Psoas muscle (tissue), 8 donors: ENCODE measurements at regions of chr15 and their contacts with region 1.

Region 1: DNA sequence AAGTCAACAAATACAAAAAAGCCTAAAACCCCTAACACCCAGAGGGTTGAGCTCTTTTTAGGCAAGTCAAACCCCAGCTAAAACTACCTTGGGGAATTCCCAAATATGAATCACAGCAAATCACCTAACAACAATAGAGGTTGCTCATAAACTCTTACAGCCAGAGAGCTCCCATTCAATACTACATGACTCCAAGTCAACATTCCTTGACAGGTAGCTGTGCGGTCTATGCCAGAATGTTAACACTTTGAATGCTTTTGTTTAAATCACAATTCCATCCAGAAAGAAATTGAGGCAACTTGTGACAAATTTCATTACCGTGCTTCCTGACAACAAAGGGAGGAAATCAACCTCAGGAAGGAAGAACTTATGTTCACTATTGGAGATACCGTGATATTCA is 7.5 kb upstream of the UACA start:
- DNase-seq: no peak
- ATAC-seq: no peak
- H3K4me3 ChIP-seq: no peak overlapping the region
- H3K27ac ChIP-seq: peak overlapping the region; percentile 44
- H3K4me1 ChIP-seq: peaks cover 25% of the 10 kb centered on the region
- H3K27me3 ChIP-seq: no peaks in the 10 kb centered on the region
- CTCF ChIP-seq: no peak

Region 2: DNA sequence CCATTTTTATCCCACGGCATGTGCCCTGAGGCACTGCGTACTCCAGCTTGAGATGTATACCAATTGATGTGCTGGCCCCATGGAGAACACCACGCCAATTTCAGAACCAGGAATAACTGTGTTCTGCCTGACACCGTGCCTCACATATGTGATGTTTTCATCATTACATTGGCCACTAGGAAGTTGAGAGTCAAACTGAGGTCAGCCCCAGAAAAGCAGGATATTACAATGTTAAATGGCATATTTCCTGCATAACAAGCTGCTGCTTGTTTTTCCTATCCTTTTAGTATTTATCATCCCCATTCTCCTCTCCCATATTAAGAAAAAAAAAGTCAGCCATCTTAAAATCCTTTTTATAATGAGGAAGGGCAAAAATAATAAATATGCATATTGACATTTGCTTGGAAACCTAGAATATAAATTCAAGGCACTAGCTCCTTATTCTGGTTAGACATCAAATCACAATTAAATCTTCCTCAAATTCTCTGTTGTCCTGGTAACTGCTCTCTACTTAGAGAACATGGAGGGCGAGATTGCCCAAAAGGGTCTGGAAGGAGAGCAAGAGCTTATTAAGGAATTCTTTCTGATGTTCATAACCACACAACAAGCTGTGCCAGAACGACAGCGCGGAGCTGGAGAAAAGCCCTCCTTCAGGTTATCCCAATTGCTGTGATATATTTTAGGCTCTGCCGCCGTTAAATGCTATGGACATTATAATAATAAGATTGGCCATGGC is 120.1 kb before region 1 on chr15:
- intact Hi-C with region 1: no loop called
- DNase-seq: no peak
- ATAC-seq: no peak
- H3K4me3 ChIP-seq: no peak overlapping the region
- H3K27ac ChIP-seq: no peak overlapping the region
- H3K4me1 ChIP-seq: no peaks in the 10 kb centered on the region
- H3K27me3 ChIP-seq: no peaks in the 10 kb centered on the region
- CTCF ChIP-seq: no peak

Region 3: GRCh38 chr15:70806992-70807712 is 36.3 kb after region 1 on chr15:
- intact Hi-C with region 1: loop called in 1 of 2 experiments (anchors 5 kb)
- DNase-seq: peak; percentile 44 to 64
- ATAC-seq: no peak
- H3K4me3 ChIP-seq: no peak overlapping the region
- H3K27ac ChIP-seq: no peak overlapping the region
- H3K4me1 ChIP-seq: peaks cover 6% of the 10 kb centered on the region
- H3K27me3 ChIP-seq: no peaks in the 10 kb centered on the region
- CTCF ChIP-seq: no peak